Lower lobe of right lung (tissue), 2 donors: ENCODE measurements at regions of chr3 and their contacts with region 1.

Region 1: GRCh38 chr3:48556793-48557626 is at the start of gene PFKFB4:
- DNase-seq: peak; percentile 99
- ATAC-seq: peak; percentile 94 to 95
- H3K4me3 ChIP-seq: peak within 1 kb of the TSS; percentile 63
- H3K27ac ChIP-seq: peak within 1 kb of the TSS; percentile 77
- H3K4me1 ChIP-seq: peaks cover 46% of the 10 kb centered on the region
- H3K27me3 ChIP-seq: no peaks in the 10 kb centered on the region
- CTCF ChIP-seq: no peak
- total RNA-seq, gene PFKFB4: 12.9 TPM

Region 2: GRCh38 chr3:48188266-48189201 is 368.5 kb before region 1 on chr3 and contains the start of gene CDC25A:
- intact Hi-C with region 1: no loop called
- DNase-seq: peak; percentile 96
- ATAC-seq: peak; percentile 99
- H3K4me3 ChIP-seq: peak within 1 kb of the TSS; percentile 96
- H3K27ac ChIP-seq: peak within 1 kb of the TSS; percentile 59
- H3K4me1 ChIP-seq: peaks cover 14% of the 10 kb centered on the region
- H3K27me3 ChIP-seq: no peaks in the 10 kb centered on the region
- CTCF ChIP-seq: no peak
- total RNA-seq, gene CDC25A: 0.83 TPM

Region 3: GRCh38 chr3:48465531-48466378 is 91.3 kb before region 1 on chr3:
- intact Hi-C with region 1: loop called (anchors 10 kb)
- DNase-seq: peak; percentile 98
- ATAC-seq: peak; percentile 97
- H3K4me3 ChIP-seq: peak overlapping the region; percentile 62
- H3K27ac ChIP-seq: peak overlapping the region; percentile 100
- H3K4me1 ChIP-seq: peaks cover 61% of the 10 kb centered on the region
- H3K27me3 ChIP-seq: no peaks in the 10 kb centered on the region
- CTCF ChIP-seq: peak; percentile 78